Naive thymus-derived CD4-positive, alpha-beta T cell (primary cell): ENCODE measurements at regions of chr2 and their contacts with region 1.

Region 1: DNA sequence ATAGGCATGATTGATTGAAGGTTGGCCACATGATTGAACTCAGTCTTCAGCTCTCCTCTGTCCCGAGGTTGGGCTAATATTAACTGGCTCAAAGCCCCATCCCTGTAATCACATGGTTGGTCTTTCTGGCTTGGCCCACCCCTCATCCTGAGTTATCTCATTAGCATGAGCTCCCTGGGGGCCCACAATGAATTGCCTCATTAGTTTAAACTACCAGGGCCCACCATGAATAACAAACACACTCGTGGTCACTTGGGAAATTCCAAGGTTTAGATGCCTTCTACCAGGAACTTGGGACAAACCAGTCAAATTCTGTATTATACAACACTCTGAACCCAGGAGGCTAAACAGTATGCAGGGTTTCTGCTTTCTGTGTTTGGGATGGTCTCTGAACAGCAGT is 121.7 kb upstream of the B3GNT2 start:
- DNase-seq: no peak
- ATAC-seq: no peak
- H3K4me3 ChIP-seq: no peak overlapping the region
- H3K4me3 Mint-ChIP-seq: no peak overlapping the region
- H3K27ac ChIP-seq: no peak overlapping the region
- H3K27ac Mint-ChIP-seq: no peak overlapping the region
- H3K4me1 ChIP-seq: no peaks in the 10 kb centered on the region
- H3K4me1 Mint-ChIP-seq: peaks cover 0 to 2% (median 0%) of the 10 kb centered on the region in 7 donors
- H3K27me3 ChIP-seq: no peaks in the 10 kb centered on the region
- H3K27me3 Mint-ChIP-seq: no peaks in the 10 kb centered on the region

Region 2: GRCh38 chr2:62038975-62039771 is 35.1 kb before region 1 on chr2:
- CTCF ChIA-PET with region 1: no interaction called
- POLR2A ChIA-PET with region 1: no interaction called
- intact Hi-C with region 1: no loop called
- DNase-seq: peak in 4 of 9 donors; percentile 1 to 24 (median 4)
- ATAC-seq: peak; percentile 75
- H3K4me3 ChIP-seq: no peak overlapping the region
- H3K4me3 Mint-ChIP-seq: peak overlapping the region in 3 of 10 donors; percentile 1 to 45 (median 15)
- H3K27ac ChIP-seq: no peak overlapping the region
- H3K27ac Mint-ChIP-seq: peak overlapping the region in 6 of 9 donors; percentile 20 to 70 (median 40)
- H3K4me1 ChIP-seq: peaks cover 5 to 8% of the 10 kb centered on the region in 2 donors
- H3K4me1 Mint-ChIP-seq: peaks cover 3 to 27% (median 20%) of the 10 kb centered on the region in 7 donors
- H3K27me3 ChIP-seq: no peaks in the 10 kb centered on the region
- H3K27me3 Mint-ChIP-seq: no peaks in the 10 kb centered on the region

Region 3: DNA sequence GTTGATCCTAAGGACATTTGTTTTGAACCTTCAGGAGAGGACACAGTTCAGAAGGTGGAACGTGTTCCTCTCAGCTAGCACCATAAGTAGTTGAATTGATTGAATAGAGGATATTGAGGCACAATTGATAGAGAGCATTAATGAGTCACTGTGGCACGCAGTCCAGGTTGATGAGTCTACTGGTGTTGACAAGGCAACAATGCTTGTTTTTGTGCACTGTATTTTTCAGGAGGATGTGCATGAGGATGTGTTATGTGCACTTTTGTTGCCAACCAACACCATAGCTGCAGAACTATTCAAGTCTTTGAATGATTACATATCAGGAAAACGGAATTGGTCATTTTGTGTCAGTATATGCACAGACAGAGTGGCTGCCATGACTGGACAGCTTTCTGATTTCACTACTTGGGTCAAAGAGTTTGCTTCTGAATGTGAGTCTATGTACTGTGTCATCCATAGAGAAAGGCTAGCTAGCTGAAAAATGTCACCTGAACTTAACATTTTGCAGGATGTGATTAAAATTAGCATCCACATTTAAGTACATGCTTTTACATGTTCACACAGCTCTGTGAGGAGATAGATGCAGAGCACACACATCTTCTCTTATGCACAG is 18.4 kb before region 1 on chr2:
- CTCF ChIA-PET with region 1: no interaction called
- POLR2A ChIA-PET with region 1: no interaction called
- intact Hi-C with region 1: loop called in 1 of 2 experiments (anchors 2 kb)
- DNase-seq: no peak
- ATAC-seq: no peak
- H3K4me3 ChIP-seq: no peak overlapping the region
- H3K4me3 Mint-ChIP-seq: no peak overlapping the region
- H3K27ac ChIP-seq: no peak overlapping the region
- H3K27ac Mint-ChIP-seq: no peak overlapping the region
- H3K4me1 ChIP-seq: peaks cover 0 to 9% of the 10 kb centered on the region in 2 donors
- H3K4me1 Mint-ChIP-seq: peaks cover 0 to 13% (median 5%) of the 10 kb centered on the region in 7 donors
- H3K27me3 ChIP-seq: no peaks in the 10 kb centered on the region
- H3K27me3 Mint-ChIP-seq: no peaks in the 10 kb centered on the region

Region 4: DNA sequence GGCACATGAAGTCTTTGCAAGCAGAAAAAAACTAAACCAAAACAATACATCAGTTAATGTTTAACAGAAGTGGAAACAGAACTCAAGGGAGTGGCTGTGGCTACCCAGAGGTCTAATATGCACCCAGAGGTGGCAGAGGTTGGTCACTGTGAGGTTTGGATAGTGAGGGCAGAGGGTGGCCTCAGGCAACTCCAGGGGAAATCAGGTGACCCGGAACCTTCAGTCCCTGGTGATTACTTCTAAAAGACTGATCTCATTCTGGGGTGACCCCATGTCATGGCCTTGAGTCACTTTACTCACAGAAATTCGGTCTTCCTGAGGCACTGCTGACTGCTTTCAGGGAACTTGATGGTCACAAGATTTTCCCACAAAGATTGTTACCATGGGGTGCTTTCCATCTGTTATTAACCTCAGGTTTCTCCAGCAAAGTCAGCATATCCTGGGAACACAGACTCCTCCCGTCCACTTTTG is 332.4 kb after region 1 on chr2:
- CTCF ChIA-PET with region 1: no interaction called
- POLR2A ChIA-PET with region 1: no interaction called
- intact Hi-C with region 1: no loop called
- DNase-seq: no peak
- ATAC-seq: no peak
- H3K4me3 ChIP-seq: no peak overlapping the region
- H3K4me3 Mint-ChIP-seq: no peak overlapping the region
- H3K27ac ChIP-seq: no peak overlapping the region
- H3K27ac Mint-ChIP-seq: no peak overlapping the region
- H3K4me1 ChIP-seq: no peaks in the 10 kb centered on the region
- H3K4me1 Mint-ChIP-seq: no peaks in the 10 kb centered on the region
- H3K27me3 ChIP-seq: no peaks in the 10 kb centered on the region
- H3K27me3 Mint-ChIP-seq: no peaks in the 10 kb centered on the region